ENCODE measurements at regions of chr19 and their contacts with region 1.

Region 1: GRCh38 chr19:44770550-44771257 is 7.0 kb upstream of the CBLC start:
- DNase-seq: peak; percentile 97
- ATAC-seq: peak; percentile 100
- H3K4me3 Mint-ChIP-seq: peak overlapping the region; percentile 73
- H3K27ac Mint-ChIP-seq: peak overlapping the region; percentile 86
- H3K4me1 Mint-ChIP-seq: peaks cover 30% of the 10 kb centered on the region
- H3K27me3 Mint-ChIP-seq: no peaks in the 10 kb centered on the region
- CTCF ChIP-seq: no peak

Region 2: DNA sequence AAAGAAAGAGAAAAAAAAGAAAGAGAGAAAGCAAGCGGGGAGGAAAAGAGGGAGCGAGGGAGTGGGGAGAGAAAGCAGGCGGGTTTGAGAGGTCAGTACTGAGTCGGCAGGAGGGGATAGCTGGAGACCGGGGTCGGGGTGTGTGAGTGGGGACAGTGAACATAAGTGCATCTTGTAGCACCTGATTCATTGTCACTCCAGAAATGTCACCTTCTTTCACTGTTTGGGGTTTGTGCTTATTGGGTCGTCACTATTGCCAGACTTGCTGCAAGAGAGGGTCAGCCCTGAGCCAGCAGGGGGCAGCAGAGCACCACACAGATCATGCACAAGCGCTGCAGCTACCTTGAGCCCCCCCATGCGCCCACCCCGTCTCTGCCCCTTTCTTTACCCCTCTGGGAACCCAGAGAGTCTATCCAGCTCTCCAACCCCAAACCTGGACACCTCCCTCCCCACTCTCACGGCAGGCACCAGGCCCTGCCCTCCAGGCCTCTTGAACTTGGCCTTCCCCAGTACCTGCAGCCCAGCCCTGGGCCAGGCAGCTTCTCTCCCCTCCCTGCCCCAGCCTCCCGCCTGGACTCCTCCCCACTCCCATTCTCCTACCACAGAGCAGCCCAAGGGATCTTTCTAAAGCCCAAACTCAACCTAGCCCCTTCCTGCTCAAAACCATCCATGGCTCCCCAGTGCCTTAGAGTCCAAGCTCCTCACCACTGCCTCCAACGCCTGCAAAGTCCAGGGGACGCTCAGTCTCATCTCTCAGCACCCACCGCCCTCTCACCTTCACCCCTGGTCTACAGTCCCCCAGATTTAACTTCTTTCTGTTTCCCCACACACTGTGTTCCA is 81.4 kb before region 1 on chr19:
- CTCF ChIA-PET with region 1: interaction called, 25 read pairs
- POLR2A ChIA-PET with region 1: interaction called, 18 read pairs
- intact Hi-C with region 1: loop called (anchors 1 kb)
- DNase-seq: peak; percentile 73
- ATAC-seq: peak; percentile 51
- H3K4me3 Mint-ChIP-seq: no peak overlapping the region
- H3K27ac Mint-ChIP-seq: no peak overlapping the region
- H3K4me1 Mint-ChIP-seq: peaks cover 51% of the 10 kb centered on the region
- H3K27me3 Mint-ChIP-seq: peaks cover 11% of the 10 kb centered on the region
- CTCF ChIP-seq: no peak

Region 3: GRCh38 chr19:44746946-44747738 is 23.6 kb before region 1 on chr19:
- CTCF ChIA-PET with region 1: interaction called, 8 read pairs
- POLR2A ChIA-PET with region 1: interaction called, 283 read pairs
- intact Hi-C with region 1: loop called (anchors 1 kb)
- DNase-seq: peak; percentile 87
- ATAC-seq: peak; percentile 72
- H3K4me3 Mint-ChIP-seq: peak overlapping the region; percentile 98
- H3K27ac Mint-ChIP-seq: peak overlapping the region; percentile 97
- H3K4me1 Mint-ChIP-seq: peaks cover 56% of the 10 kb centered on the region
- H3K27me3 Mint-ChIP-seq: no peaks in the 10 kb centered on the region
- CTCF ChIP-seq: no peak

Region 4: DNA sequence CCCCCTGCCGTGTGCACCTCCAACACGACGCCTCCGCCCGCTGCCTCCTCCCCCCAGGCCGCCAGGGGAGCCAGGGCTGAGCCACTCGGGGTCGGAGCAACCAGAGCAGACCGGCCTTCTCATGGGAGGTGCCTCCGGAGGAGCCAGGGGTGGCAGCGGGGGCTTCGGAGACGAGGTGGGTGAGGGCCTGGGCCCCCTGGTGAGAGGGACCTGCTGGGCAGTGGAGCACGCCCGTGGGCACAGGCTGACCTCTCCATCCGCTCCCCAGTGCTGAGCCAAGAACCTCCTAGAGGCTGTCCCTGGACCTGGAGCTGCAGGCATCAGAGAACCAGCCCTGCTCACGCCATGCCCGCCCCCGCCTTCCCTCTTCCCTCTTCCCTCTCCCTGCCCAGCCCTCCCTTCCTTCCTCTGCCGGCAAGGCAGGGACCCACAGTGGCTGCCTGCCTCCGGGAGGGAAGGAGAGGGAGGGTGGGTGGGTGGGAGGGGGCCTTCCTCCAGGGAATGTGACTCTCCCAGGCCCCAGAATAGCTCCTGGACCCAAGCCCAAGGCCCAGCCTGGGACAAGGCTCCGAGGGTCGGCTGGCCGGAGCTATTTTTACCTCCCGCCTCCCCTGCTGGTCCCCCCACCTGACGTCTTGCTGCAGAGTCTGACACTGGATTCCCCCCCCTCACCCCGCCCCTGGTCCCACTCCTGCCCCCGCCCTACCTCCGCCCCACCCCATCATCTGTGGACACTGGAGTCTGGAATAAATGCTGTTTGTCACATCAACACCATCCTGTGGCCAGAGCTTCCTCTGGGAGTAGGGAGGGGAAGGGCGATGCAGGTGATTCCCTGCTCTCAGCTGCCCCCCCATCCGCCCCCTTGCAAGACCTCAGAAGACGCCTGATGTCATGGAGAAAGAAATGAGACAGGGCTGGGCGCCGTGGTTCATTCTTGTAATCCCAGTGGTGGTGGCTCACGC is 50.2 kb after region 1 on chr19:
- CTCF ChIA-PET with region 1: no interaction called
- POLR2A ChIA-PET with region 1: no interaction called
- intact Hi-C with region 1: no loop called
- DNase-seq: no peak
- ATAC-seq: no peak
- H3K4me3 Mint-ChIP-seq: no peak overlapping the region
- H3K27ac Mint-ChIP-seq: no peak overlapping the region
- H3K4me1 Mint-ChIP-seq: no peaks in the 10 kb centered on the region
- H3K27me3 Mint-ChIP-seq: peaks cover 12% of the 10 kb centered on the region
- CTCF ChIP-seq: no peak

Region 5: DNA sequence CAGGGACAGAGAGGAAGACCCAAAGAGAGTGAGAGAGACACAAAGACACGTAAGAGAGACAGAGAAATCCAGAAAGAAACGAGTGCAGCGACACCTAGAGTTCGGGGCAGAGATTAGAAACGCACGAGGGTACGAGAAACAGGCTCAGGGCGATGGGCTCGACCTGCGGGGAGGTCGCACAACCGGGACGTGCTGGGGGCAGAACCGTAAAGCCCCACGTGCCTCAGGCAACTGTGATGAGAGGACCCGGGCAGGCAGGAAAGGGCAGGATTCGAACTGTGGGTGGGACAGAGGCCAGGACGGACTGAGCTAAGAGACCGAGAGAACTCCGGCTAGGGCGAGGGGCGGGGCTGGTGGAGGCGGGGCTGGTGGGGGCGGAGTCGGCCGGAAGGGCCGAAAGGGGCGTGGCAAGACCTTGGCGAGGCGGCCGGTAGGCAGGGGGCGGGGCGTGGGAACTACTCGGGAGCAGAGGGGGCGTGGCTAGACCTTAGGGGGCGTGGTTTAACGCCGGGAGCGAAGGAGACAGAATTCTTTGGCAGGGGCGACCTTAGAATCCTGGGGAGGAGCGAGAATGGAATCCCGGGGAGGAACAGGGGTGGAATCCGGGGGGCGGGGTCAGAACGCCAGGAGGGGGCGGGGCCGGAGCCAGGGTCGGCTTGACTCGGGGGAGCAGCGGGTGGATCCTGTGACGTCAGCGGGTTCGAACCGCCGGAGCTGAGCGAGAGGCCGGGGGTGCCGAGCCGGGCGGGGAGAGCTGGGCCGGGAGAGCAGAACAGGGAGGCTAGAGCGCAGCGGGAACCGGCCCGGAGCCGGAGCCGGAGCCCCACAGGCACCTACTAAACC is 75.1 kb after region 1 on chr19 and contains the start of gene NECTIN2:
- CTCF ChIA-PET with region 1: interaction called, 4 read pairs
- POLR2A ChIA-PET with region 1: no interaction called
- intact Hi-C with region 1: loop called (anchors 1 kb)
- DNase-seq: peak; percentile 68
- ATAC-seq: peak; percentile 73
- H3K4me3 Mint-ChIP-seq: peak within 1 kb of the TSS; percentile 89
- H3K27ac Mint-ChIP-seq: peak within 1 kb of the TSS; percentile 38
- H3K4me1 Mint-ChIP-seq: peaks cover 31% of the 10 kb centered on the region
- H3K27me3 Mint-ChIP-seq: peaks cover 32% of the 10 kb centered on the region
- CTCF ChIP-seq: no peak
- total RNA-seq, gene NECTIN2: 0.17 and 0.35 TPM in 2 replicates